Psoas muscle (tissue), 8 donors: ENCODE measurements at regions of chr2 and their contacts with region 1.

Region 1: DNA sequence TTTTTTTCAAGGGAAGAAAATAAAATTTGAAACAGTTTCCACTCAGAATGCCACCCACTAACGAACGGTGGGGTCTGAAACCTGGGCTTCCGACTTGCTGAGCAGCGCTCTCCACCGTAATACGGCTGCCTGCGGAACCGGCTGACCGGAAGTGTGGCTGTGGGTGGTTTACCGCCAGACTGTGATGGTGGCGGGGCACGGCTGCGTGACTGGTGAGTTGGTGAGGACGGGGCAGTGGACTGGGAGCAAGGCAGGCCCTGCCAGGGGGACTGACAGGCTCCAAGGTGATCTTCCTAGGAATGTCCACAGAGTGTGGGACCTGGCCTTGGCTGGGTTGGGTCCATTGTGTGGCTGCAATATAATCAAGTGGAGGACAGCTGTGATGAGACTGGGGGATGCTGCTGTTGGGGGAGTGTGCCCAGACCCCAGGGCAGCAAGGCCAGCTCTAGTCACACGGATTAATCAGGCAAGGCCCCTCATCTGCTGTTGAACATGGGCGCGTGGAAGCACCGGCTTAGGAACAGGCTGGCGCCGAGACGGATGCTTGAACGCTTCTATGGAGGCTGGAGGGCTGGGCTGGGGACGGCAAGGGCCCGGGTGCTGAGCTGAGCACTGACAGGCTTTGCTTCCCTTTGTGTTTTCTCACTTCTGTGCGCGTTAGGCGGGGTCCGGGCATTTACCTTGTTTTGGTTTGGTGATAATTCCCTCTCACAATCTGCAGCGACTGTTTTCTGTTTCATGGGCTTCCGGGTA is 357.7 kb upstream of the SPRED2 start:
- DNase-seq: no peak
- ATAC-seq: no peak
- H3K4me3 ChIP-seq: no peak overlapping the region
- H3K27ac ChIP-seq: no peak overlapping the region
- H3K4me1 ChIP-seq: no peaks in the 10 kb centered on the region
- H3K27me3 ChIP-seq: no peaks in the 10 kb centered on the region
- CTCF ChIP-seq: no peak

Region 2: GRCh38 chr2:65647249-65647842 is 142.8 kb before region 1 on chr2:
- intact Hi-C with region 1: loop called in 1 of 2 experiments (anchors 10 kb)
- DNase-seq: no peak
- ATAC-seq: no peak
- H3K4me3 ChIP-seq: no peak overlapping the region
- H3K27ac ChIP-seq: no peak overlapping the region
- H3K4me1 ChIP-seq: no peaks in the 10 kb centered on the region
- H3K27me3 ChIP-seq: no peaks in the 10 kb centered on the region
- CTCF ChIP-seq: no peak